ENCODE measurements at regions of chr11 and their contacts with region 1.

Region 1: DNA sequence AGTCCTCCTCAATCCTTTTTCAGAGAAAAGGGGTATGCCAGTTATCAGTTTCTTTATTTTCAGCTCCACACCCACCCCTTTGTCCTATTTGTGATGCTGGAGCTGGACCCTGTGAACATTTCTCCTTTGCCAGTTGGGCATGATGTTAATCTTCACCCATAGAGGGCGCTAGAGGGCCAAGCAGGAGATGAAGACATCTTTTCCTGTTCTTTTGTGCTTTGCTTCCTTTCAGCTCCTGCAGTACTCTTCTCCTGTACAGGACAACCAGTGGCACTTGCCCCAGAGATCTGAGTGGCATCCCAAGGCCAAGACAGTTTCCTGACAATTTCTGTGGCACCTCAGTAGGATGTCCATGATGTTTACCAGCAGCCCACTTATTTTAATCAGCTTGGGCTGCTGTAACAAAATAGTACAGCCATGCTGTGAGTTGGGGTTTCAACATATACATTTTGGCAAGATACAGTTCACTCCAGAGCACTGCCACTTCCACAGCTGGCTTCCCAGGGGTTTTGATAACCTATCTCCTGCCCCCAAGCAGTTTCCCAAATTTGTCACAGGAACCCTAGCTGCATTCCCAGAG is 4.6 kb downstream of the SAA2 start:
- DNase-seq: peak; percentile 54
- CTCF ChIP-seq: peak; percentile 91

Region 2: GRCh38 chr11:18229501-18229900 is 14.4 kb before region 1 on chr11:
- CTCF ChIA-PET with region 1: interaction called, 63 read pairs
- POLR2A ChIA-PET with region 1: no interaction called
- DNase-seq: peak; percentile 73
- CTCF ChIP-seq: no peak

Region 3: DNA sequence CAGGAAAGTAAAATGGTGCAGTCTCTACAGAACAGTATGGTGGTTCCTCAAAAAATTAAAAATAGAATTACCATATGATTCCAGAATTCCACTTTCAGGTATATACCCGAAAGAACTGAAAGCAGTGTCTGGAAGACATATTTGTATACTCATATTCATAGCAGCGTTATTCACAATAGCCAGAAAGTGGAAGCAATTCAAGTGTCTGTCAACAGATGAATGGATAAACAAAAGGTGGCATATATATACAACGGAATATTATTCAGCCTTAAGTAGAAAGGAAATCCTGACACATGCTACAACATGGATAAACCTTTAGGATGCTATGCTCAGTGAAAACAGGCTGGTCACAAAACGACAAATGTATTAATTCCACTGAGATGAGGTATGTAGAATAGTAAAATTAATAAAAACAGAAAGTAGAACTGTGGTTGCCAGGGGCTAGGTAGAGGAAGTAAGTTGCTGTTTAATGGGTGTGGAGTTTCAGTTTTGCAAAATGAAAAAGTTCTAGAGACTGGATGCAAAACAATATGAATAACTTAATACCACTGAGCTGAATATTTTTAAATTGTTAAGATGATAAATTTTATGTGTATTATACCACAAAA is 36.7 kb after region 1 on chr11:
- CTCF ChIA-PET with region 1: interaction called, 10 read pairs
- POLR2A ChIA-PET with region 1: no interaction called
- DNase-seq: peak; percentile 35
- CTCF ChIP-seq: no peak

Region 4: DNA sequence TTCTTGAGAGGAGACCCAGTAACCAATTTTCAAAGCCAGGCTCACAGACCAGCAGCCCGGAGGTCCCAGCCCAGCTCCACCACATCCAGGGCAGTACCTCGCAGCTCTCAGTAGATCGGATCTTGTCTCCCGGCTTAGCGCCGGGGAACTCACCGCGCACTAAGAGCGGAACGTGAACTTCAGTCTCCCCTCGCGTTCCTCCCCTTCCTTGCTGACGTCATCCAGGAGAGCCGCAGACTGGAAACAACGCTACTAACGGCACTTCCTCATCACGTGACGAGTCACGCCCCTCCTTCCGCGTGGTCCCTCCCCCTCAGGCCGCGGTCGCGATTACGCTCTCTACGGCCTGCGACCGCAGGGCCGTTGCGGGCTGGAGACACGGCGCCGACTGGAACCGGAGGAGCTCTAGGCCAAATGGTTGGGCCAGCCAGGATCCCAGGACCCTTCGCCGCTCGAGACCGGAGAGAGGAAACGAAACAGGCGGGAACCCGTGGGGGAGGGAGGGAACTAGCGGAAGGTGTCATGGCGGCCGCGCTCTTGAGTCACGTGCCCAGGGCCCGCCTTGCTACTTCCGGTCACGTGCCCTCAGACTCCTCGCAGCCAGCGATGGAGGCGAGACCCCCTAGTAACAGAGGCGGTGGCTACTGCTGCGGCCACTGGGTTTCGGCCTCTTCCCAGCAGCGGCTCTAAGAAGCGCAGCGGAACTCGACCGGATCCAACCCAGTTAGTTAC is 78.3 kb after region 1 on chr11 and contains the starts of genes GTF2H1 and HPS5:
- CTCF ChIA-PET with region 1: interaction called, 11 read pairs
- POLR2A ChIA-PET with region 1: interaction called, 3 read pairs
- DNase-seq: peak; percentile 96
- CTCF ChIP-seq: no peak

Region 5: DNA sequence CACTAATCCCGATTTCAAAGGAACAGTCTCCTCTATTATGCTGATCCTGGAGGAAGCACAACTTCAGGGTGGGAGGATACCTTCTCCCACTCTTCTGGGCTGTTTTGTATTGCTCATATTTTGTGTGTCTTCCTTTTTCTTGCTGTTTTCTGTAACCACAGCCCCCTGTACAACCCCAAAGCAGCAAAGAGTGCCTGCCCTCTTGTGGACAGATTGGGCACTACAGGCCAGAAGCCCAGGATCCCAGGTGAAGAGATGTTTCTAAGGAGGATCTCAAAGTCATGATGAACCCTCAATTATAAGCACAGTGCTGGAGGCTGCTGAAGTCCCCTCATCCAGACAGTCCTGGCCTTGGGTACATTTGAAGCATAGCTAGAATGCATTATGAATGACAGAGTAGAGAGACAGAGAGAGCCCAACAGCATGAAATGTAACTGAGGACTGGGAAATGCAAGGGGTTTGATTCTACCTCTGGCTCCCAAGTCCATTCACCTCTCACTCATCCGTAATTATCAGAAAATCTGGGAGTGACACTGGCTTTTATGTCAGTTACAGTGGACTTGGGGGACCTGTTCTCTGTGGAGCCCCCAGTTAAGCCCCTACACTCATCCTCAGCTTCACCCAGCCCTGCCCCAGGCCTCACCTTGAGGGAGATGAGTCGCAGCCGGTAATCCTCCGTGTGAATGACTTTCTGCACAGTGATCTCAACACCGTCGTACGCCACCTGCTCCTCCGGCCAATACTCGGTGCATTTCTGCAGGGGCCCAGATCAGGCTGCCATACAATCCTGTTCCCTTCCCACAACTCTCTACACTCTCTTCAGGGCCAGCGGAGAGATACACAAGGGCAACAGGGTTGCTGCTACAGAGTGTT is 488.3 kb after region 1 on chr11:
- CTCF ChIA-PET with region 1: interaction called, 16 read pairs
- POLR2A ChIA-PET with region 1: no interaction called
- DNase-seq: peak; percentile 75
- CTCF ChIP-seq: peak; percentile 98

Region 6: DNA sequence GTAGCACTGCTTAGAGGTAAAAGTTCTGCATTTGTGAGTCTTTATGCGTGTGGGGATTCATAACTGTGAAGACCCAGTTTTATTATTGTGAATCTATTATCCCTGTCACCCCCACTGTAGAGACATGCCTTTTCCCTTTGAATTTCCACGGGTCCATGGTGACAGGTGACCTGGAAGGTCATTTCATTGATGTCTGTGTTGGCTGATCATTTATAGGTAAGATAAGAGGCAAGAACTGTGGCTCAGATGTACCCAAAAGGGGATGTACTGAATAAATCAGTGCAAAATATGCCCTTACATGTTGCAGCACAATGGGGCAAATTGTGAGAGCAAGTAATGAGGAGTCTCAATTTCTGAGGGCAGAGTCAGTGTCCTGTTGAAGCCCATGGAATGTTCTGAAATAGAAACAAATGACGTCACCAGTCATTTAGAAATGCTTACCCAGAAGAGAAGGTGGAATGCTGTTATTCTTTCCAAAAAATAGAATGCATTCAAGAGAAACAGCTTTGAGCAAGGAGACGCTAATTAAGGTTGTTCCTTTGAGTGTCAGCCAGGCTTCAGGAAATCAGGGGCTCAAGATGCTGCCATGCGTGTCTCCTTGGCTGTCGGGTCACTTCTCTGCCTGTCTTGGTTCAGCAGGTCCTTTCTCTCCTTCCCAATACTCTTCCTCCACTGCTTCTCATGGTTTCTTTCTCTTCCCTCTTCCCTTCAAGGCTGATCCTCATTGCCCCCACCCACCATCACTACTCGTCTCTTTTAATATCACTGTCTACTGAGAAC is 1115.5 kb after region 1 on chr11:
- CTCF ChIA-PET with region 1: no interaction called
- POLR2A ChIA-PET with region 1: no interaction called
- DNase-seq: no peak
- CTCF ChIP-seq: no peak

Measured in GM10248 (cell line).